ENCODE measurements at regions of chr5 and their contacts with region 1.

Region 1: DNA sequence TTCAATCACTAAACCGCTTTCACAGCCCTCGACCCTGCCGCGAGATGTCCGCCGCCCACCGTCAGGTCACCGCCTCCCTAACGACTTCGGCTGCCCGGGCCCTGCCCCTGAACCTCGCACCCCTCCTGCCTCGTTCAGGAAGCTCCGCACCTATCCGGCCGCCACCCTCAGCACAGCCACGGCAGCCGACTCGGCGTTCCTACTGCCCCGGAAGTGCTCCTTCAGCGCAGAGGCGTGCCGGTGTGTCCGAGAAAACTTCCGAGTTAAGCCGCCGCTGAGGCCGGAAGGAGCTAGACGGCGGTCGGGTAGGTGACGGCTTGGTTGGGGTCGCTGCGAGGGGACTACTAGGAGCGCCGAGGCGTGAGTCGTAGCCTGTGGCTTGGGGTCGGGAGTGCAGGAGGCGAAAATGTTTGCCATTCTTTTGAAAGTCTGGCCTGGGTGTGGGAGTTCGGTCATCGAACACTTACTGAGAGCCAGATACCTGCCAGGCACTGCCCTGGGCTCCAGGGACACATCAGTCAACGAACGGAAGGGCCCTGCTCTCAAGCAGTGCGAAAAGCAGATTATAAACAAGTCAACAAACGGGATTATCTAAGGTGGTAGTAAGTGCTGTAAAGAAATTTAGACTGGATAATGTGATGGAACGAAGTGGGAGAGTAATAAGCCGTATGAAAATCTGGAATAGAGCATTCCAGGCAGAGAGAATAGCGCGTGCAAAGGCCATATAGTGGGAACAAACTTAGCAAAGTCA is at the starts of genes FAM114A2 and MFAP3:
- H3K4me3 ChIP-seq: peak within 1 kb of the TSS; percentile 55
- H3K27ac ChIP-seq: peak within 1 kb of the TSS; percentile 65
- H3K4me1 ChIP-seq: peaks cover 7% of the 10 kb centered on the region
- CTCF ChIP-seq: no peak

Region 2: DNA sequence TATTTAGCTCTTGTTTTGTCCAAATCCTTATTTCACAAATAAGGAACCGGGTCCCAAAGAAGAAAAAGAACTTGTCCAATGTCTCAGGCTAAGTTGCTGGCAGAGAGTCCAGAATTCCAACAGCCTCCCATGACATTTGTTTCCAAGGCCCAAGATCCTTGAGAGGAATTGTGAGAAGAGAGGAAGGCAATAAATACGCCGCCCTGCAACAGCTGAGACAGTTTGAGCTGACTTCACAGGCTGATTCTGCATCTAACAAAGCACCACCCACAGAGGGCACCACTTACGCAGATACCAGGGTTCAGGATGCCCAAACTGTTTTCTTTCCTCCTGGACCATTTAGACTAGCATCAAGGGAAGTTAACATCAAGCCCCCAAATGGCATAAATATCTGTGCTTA is 211.5 kb before region 1 on chr5:
- CTCF ChIA-PET with region 1: no interaction called
- POLR2A ChIA-PET with region 1: no interaction called
- H3K4me3 ChIP-seq: no peak overlapping the region
- H3K27ac ChIP-seq: no peak overlapping the region
- H3K4me1 ChIP-seq: no peaks in the 10 kb centered on the region
- CTCF ChIP-seq: no peak

Region 3: GRCh38 chr5:154049636-154050035 is 10.8 kb after region 1 on chr5:
- CTCF ChIA-PET with region 1: interaction called, 3 read pairs
- POLR2A ChIA-PET with region 1: interaction called, 16 read pairs
- H3K4me3 ChIP-seq: no peak overlapping the region
- H3K27ac ChIP-seq: no peak overlapping the region
- H3K4me1 ChIP-seq: peaks cover 5% of the 10 kb centered on the region; the same call in 1 of the 2 replicates
- CTCF ChIP-seq: no peak

Region 4: GRCh38 chr5:154058055-154059038 is 19.5 kb after region 1 on chr5:
- CTCF ChIA-PET with region 1: interaction called, 3 read pairs
- POLR2A ChIA-PET with region 1: interaction called, 12 read pairs
- H3K4me3 ChIP-seq: no peak overlapping the region
- H3K27ac ChIP-seq: no peak overlapping the region
- H3K4me1 ChIP-seq: peaks cover 19% of the 10 kb centered on the region
- CTCF ChIP-seq: no peak